Naive thymus-derived CD4-positive, alpha-beta T cell (primary cell): ENCODE measurements at regions of chr2 and their contacts with region 1.

Region 1: DNA sequence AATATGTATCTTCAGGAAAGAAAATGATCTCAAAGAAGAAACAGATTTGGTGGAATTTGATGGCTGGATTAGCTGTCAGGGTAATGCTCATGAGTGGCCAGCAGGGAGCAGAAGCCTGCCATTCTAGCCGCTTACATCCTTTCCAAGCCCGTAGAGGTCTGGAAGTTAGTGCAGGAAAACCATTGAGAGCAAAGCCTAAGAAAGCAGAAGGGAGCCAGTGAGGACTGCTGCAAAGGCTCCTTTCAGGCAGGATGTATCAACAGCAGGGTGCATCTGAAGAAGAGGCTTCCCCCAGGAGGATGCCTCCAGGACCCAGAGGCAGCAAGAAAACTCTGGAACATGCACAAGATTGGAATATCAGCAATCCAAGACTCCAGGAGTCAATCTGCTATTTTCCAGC is 22.9 kb upstream of the LBH start:
- DNase-seq: peak in 4 of 9 donors; percentile 19 to 42 (median 28)
- ATAC-seq: peak; percentile 69
- H3K4me3 ChIP-seq: peak overlapping the region; percentile 3
- H3K4me3 Mint-ChIP-seq: peak overlapping the region; percentile 14 to 80 (median 68)
- H3K27ac ChIP-seq: peak overlapping the region; percentile 25
- H3K27ac Mint-ChIP-seq: peak overlapping the region in 8 of 9 donors; percentile 82 to 95 (median 88)
- H3K4me1 ChIP-seq: peaks cover 8 to 33% of the 10 kb centered on the region in 2 donors
- H3K4me1 Mint-ChIP-seq: peaks cover 14 to 44% (median 35%) of the 10 kb centered on the region in 7 donors
- H3K27me3 ChIP-seq: no peaks in the 10 kb centered on the region
- H3K27me3 Mint-ChIP-seq: peaks cover 0 to 7% (median 0%) of the 10 kb centered on the region in 5 donors

Region 2: GRCh38 chr2:30225131-30225762 is 16.8 kb after region 1 on chr2:
- CTCF ChIA-PET with region 1: interaction called, 220 read pairs
- POLR2A ChIA-PET with region 1: interaction called, 353 read pairs
- intact Hi-C with region 1: loop called (anchors 1 kb)
- DNase-seq: peak in 8 of 9 donors; percentile 46 to 77 (median 72)
- ATAC-seq: peak; percentile 81
- H3K4me3 ChIP-seq: peak overlapping the region; percentile 67
- H3K4me3 Mint-ChIP-seq: peak overlapping the region; percentile 87 to 99 (median 94)
- H3K27ac ChIP-seq: peak overlapping the region; percentile 95
- H3K27ac Mint-ChIP-seq: peak overlapping the region; percentile 95 to 100 (median 100)
- H3K4me1 ChIP-seq: peaks cover 63 to 67% of the 10 kb centered on the region in 2 donors
- H3K4me1 Mint-ChIP-seq: peaks cover 48 to 86% (median 76%) of the 10 kb centered on the region in 7 donors
- H3K27me3 ChIP-seq: no peaks in the 10 kb centered on the region
- H3K27me3 Mint-ChIP-seq: peaks cover 0 to 3% (median 0%) of the 10 kb centered on the region in 5 donors

Region 3: DNA sequence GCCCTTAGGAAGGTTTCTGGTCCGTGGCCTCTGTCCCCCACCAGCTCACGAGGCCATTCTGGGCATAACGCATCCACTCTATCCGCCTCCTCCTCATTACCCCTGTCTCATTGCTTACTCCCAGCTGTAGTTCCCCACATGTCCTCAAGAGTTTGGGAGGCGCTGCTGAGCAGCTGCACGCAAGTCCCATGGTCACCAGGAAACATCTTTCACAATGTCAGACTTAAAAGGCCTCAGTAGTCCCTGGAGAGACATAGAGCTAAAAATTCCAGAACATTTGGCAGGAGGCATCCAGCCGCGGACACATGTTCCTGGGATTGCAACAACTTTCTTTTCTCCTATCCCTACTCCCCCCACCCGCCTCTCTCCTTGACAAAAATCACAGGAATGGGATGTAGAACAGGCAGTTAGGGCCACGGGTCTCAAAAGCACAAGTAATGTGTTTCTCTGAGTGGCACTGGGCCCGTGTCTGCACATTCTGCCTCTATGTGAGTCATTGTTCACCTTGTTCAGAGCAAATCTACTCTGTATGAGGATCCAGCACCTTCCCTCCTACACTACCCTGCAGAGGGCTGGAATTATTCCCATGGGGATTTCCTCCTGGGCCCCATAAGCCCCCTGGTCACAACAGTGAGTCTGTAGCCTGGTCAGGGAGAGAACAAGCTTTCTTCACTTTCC is 31.0 kb after region 1 on chr2:
- CTCF ChIA-PET with region 1: interaction called, 220 read pairs
- POLR2A ChIA-PET with region 1: interaction called, 353 read pairs
- intact Hi-C with region 1: loop called in 1 of 2 experiments (anchors 1 kb)
- DNase-seq: peak; percentile 55 to 79 (median 74)
- ATAC-seq: peak; percentile 88
- H3K4me3 ChIP-seq: peak overlapping the region; percentile 45
- H3K4me3 Mint-ChIP-seq: peak overlapping the region; percentile 65 to 98 (median 92)
- H3K27ac ChIP-seq: peak overlapping the region; percentile 97
- H3K27ac Mint-ChIP-seq: peak overlapping the region; percentile 61 to 100 (median 90)
- H3K4me1 ChIP-seq: peaks cover 75 to 87% of the 10 kb centered on the region in 2 donors
- H3K4me1 Mint-ChIP-seq: peaks cover 68 to 97% (median 89%) of the 10 kb centered on the region in 7 donors
- H3K27me3 ChIP-seq: no peaks in the 10 kb centered on the region
- H3K27me3 Mint-ChIP-seq: no peaks in the 10 kb centered on the region

Region 4: GRCh38 chr2:30252723-30253701 is 44.6 kb after region 1 on chr2:
- CTCF ChIA-PET with region 1: interaction called, 6 read pairs
- POLR2A ChIA-PET with region 1: interaction called, 9 read pairs
- intact Hi-C with region 1: loop called in 1 of 2 experiments (anchors 2 kb)
- DNase-seq: peak in 4 of 9 donors; percentile 38 to 83 (median 53)
- ATAC-seq: peak; percentile 36
- H3K4me3 ChIP-seq: no peak overlapping the region
- H3K4me3 Mint-ChIP-seq: peak overlapping the region; percentile 53 to 79 (median 72)
- H3K27ac ChIP-seq: peak overlapping the region; percentile 86
- H3K27ac Mint-ChIP-seq: peak overlapping the region; percentile 72 to 100 (median 97)
- H3K4me1 ChIP-seq: peaks cover 77 to 93% of the 10 kb centered on the region in 2 donors
- H3K4me1 Mint-ChIP-seq: peaks cover 65 to 99% (median 97%) of the 10 kb centered on the region in 7 donors
- H3K27me3 ChIP-seq: no peaks in the 10 kb centered on the region
- H3K27me3 Mint-ChIP-seq: no peaks in the 10 kb centered on the region